GM12878 (cell line): ENCODE measurements at regions of chr3 and their contacts with region 1.

Region 1: GRCh38 chr3:119662604-119663373 is 2.4 kb upstream of the POPDC2 start:
- DNase-seq: no peak
- ATAC-seq: peak; percentile 45
- H3K4me3 ChIP-seq: no peak overlapping the region
- H3K27ac ChIP-seq: peak overlapping the region; percentile 38
- H3K4me1 ChIP-seq: peaks cover 30% of the 10 kb centered on the region
- H3K27me3 ChIP-seq: no peaks in the 10 kb centered on the region
- CTCF ChIP-seq: no peak; a peak in 1 of 6 replicates
- EP300 ChIP-seq: no peak
- POLR2A ChIP-seq: no peak
- RAD21 ChIP-seq: no peak; the same call in 1 of the 2 replicates

Region 2: GRCh38 chr3:119628816-119629445 is 33.9 kb before region 1 on chr3:
- CTCF ChIA-PET with region 1: interaction called, 8 read pairs
- POLR2A ChIA-PET with region 1: interaction called, 7 read pairs
- RAD21 ChIA-PET with region 1: interaction called, 14 read pairs
- SMC1A ChIA-PET with region 1: interaction called, 9 read pairs
- in situ Hi-C with region 1: no loop called
- intact Hi-C with region 1: no loop called
- DNase-seq: peak; percentile 64
- ATAC-seq: peak; percentile 71
- H3K4me3 ChIP-seq: peak overlapping the region; percentile 24; the same call in 1 of the 2 replicates
- H3K27ac ChIP-seq: peak overlapping the region; percentile 84
- H3K4me1 ChIP-seq: peaks cover 49% of the 10 kb centered on the region
- H3K27me3 ChIP-seq: no peaks in the 10 kb centered on the region
- CTCF ChIP-seq: no peak
- EP300 ChIP-seq: peak in 1 of 2 experiments; percentile 18; a peak in 1 of 4 replicates
- POLR2A ChIP-seq: no peak
- RAD21 ChIP-seq: no peak

Region 3: GRCh38 chr3:119637679-119638525 is 24.9 kb before region 1 on chr3:
- CTCF ChIA-PET with region 1: interaction called, 6 read pairs
- POLR2A ChIA-PET with region 1: interaction called, 5 read pairs
- RAD21 ChIA-PET with region 1: interaction called, 9 read pairs
- SMC1A ChIA-PET with region 1: interaction called, 27 read pairs
- in situ Hi-C with region 1: no loop called
- intact Hi-C with region 1: loop called (anchors 1 kb)
- DNase-seq: peak; percentile 82
- ATAC-seq: peak; percentile 62
- H3K4me3 ChIP-seq: peak overlapping the region; percentile 21; the same call in 1 of the 2 replicates
- H3K27ac ChIP-seq: peak overlapping the region; percentile 96
- H3K4me1 ChIP-seq: peaks cover 37% of the 10 kb centered on the region
- H3K27me3 ChIP-seq: no peaks in the 10 kb centered on the region
- CTCF ChIP-seq: no peak
- EP300 ChIP-seq: peak; percentile 16 to 29; a peak in 1 of 4 replicates
- POLR2A ChIP-seq: no peak
- RAD21 ChIP-seq: no peak

Region 4: GRCh38 chr3:119643528-119643927 is 19.3 kb before region 1 on chr3:
- CTCF ChIA-PET with region 1: interaction called, 7 read pairs
- POLR2A ChIA-PET with region 1: interaction called, 5 read pairs
- RAD21 ChIA-PET with region 1: interaction called, 9 read pairs
- SMC1A ChIA-PET with region 1: interaction called, 27 read pairs
- in situ Hi-C with region 1: no loop called
- intact Hi-C with region 1: loop called (anchors 1 kb)
- DNase-seq: no peak
- ATAC-seq: no peak
- H3K4me3 ChIP-seq: no peak overlapping the region
- H3K27ac ChIP-seq: no peak overlapping the region
- H3K4me1 ChIP-seq: peaks cover 15% of the 10 kb centered on the region
- H3K27me3 ChIP-seq: no peaks in the 10 kb centered on the region
- CTCF ChIP-seq: no peak
- EP300 ChIP-seq: no peak
- POLR2A ChIP-seq: no peak
- RAD21 ChIP-seq: no peak